Right lobe of liver (tissue), 6 donors: ENCODE measurements at regions of chr7 and their contacts with region 1.

Region 1: GRCh38 chr7:101410743-101411507 is 48.2 kb downstream of the COL26A1 start:
- DNase-seq: peak; percentile 51 to 64 (median 62)
- ATAC-seq: peak; percentile 83 to 96 (median 92)
- H3K4me3 ChIP-seq: no peak overlapping the region
- H3K27ac ChIP-seq: no peak overlapping the region
- H3K4me1 ChIP-seq: no peaks in the 10 kb centered on the region
- H3K27me3 ChIP-seq: no peaks in the 10 kb centered on the region
- CTCF ChIP-seq: peak; percentile 84 to 93 (median 88)
- POLR2A ChIP-seq: no peak

Region 2: DNA sequence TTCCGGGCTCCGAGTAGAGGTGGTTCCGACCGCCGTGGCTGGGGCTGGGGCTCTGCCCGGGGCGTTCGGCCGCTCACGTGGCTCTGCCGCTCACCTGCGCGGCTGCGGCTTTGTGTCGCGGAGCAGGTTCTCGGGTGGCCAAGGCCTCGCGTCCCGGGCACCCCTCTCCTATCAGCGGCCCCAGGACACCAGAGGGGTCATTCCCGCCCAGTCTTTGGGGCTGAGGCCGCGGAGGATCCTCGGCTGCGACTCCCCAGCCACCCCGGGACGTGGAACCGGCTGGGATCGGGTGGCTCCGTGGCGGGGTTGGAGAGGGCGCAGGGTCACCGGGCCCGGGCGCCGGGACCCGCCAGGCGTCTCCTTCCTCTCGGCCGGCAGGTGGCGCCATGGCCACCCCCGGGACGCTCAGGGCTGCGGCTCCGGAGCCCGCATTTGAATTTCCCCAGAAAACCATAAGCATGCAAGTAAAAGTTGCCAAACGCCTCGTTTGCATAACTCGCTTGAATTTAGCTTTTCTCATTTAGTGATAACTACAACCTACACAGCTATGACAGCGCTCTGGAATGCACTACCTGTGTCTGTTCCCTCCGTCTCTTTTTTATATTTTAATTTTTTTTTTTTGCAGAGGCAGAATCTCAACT is 47.1 kb before region 1 on chr7:
- intact Hi-C with region 1: loop called in 1 of 2 experiments (anchors 10 kb)
- DNase-seq: peak; percentile 77 to 85 (median 84)
- ATAC-seq: peak; percentile 94 to 97 (median 96)
- H3K4me3 ChIP-seq: peak overlapping the region; percentile 53 to 69 (median 64)
- H3K27ac ChIP-seq: peak overlapping the region; percentile 38 to 95 (median 89)
- H3K4me1 ChIP-seq: peaks cover 0 to 6% (median 0%) of the 10 kb centered on the region in 4 donors
- H3K27me3 ChIP-seq: no peaks in the 10 kb centered on the region
- CTCF ChIP-seq: peak; percentile 85 to 99 (median 98)
- POLR2A ChIP-seq: peak; percentile 48

Region 3: GRCh38 chr7:101666741-101667140 is 255.8 kb after region 1 on chr7:
- intact Hi-C with region 1: no loop called
- DNase-seq: no peak
- ATAC-seq: no peak
- H3K4me3 ChIP-seq: no peak overlapping the region
- H3K27ac ChIP-seq: no peak overlapping the region
- H3K4me1 ChIP-seq: no peaks in the 10 kb centered on the region
- H3K27me3 ChIP-seq: no peaks in the 10 kb centered on the region
- CTCF ChIP-seq: no peak
- POLR2A ChIP-seq: no peak